ENCODE measurements at regions of chr21 and their contacts with region 1.

Region 1: DNA sequence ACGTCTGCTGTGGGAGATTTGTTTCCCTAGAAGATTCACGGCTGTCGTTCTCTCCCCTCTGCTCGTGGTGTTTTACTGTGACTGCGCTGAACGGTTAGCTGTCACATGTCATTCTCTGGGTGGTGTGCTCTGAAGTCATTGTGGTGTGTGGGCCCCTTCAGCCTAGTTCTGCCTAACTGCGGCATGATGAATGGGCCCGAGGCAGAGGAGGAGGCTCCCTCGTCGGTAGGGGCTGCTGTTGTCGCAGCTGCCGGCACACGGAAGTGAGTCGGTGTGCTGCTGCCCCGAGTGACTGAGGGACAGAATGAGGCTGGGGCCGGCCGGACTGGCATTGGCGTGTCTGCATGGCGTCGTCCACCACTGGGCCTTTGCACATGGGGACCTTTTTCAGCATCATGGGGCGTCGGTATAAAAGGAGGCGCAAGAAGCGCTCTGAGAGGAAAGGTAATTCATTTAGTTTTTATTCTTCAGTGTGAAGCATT is 77.9 kb downstream of the ADARB1 start:
- DNase-seq: peak; percentile 87
- ATAC-seq: peak; percentile 99
- H3K4me3 Mint-ChIP-seq: peak overlapping the region; percentile 63
- H3K27ac Mint-ChIP-seq: peak overlapping the region; percentile 78
- H3K4me1 Mint-ChIP-seq: peaks cover 37% of the 10 kb centered on the region
- H3K27me3 Mint-ChIP-seq: no peaks in the 10 kb centered on the region

Region 2: DNA sequence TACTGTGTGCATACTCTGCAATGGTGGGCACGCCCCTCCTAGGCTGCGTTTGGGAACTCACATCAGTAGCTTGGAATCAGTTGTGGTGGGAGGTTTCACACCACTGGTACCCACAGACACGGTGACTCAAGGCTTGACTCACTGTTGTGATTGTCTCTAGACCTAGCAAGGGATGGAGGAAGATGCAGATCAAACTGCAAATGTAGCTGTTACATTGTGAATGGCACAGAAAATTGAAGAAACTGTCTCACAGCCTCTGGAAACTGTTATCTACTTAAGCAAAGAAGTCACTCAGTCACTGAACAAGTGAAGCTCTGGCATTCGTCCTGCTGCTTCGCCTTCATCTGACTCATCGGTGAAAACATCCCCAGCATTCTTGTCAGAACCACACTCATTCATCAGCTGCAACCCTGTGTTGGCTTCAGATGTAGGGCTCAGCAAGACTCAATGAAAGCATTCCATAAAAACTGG is 75.9 kb after region 1 on chr21:
- CTCF ChIA-PET with region 1: interaction called, 6 read pairs
- POLR2A ChIA-PET with region 1: no interaction called
- intact Hi-C with region 1: loop called in 1 of 2 experiments (anchors 1 kb)
- DNase-seq: peak; percentile 90
- ATAC-seq: peak; percentile 91
- H3K4me3 Mint-ChIP-seq: no peak overlapping the region
- H3K27ac Mint-ChIP-seq: no peak overlapping the region
- H3K4me1 Mint-ChIP-seq: peaks cover 48% of the 10 kb centered on the region
- H3K27me3 Mint-ChIP-seq: no peaks in the 10 kb centered on the region

Region 3: DNA sequence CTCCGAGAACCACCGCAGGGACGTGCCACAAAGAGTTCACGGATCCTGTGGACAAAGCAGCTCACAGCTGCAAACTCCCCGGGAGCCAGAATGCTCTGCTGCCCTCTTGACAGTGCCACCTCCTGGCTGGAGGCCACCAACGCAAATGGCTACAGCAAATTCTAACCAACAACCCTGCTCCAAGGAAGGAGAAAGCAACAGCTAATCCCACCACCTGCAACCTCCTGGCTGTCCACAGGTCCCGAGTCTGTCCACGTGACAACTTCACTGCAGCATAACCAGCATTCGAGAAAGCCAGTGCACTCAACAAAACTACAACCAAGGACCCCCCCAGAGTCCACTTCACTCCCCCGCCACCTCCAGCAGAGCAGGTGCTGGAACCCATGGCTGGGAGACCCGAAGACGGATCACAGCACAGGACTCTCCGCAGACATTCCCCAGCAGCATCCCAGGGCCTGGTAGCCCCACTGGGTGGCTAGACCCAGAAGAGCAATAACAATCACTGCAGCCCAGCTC is 118.1 kb after region 1 on chr21:
- CTCF ChIA-PET with region 1: no interaction called
- POLR2A ChIA-PET with region 1: no interaction called
- intact Hi-C with region 1: loop called in 1 of 2 experiments (anchors 5 kb)
- DNase-seq: peak; percentile 47
- ATAC-seq: no peak
- H3K4me3 Mint-ChIP-seq: no peak overlapping the region
- H3K27ac Mint-ChIP-seq: no peak overlapping the region
- H3K4me1 Mint-ChIP-seq: peaks cover 16% of the 10 kb centered on the region
- H3K27me3 Mint-ChIP-seq: no peaks in the 10 kb centered on the region

Region 4: GRCh38 chr21:45439161-45439872 is 287.0 kb after region 1 on chr21:
- CTCF ChIA-PET with region 1: no interaction called
- POLR2A ChIA-PET with region 1: no interaction called
- intact Hi-C with region 1: loop called (anchors 1 kb)
- DNase-seq: peak; percentile 92
- ATAC-seq: peak; percentile 90
- H3K4me3 Mint-ChIP-seq: peak overlapping the region; percentile 41
- H3K27ac Mint-ChIP-seq: no peak overlapping the region
- H3K4me1 Mint-ChIP-seq: peaks cover 4% of the 10 kb centered on the region
- H3K27me3 Mint-ChIP-seq: peaks cover 3% of the 10 kb centered on the region